H1 (cell line): ENCODE measurements at regions of chr2 and their contacts with region 1.

Region 1: DNA sequence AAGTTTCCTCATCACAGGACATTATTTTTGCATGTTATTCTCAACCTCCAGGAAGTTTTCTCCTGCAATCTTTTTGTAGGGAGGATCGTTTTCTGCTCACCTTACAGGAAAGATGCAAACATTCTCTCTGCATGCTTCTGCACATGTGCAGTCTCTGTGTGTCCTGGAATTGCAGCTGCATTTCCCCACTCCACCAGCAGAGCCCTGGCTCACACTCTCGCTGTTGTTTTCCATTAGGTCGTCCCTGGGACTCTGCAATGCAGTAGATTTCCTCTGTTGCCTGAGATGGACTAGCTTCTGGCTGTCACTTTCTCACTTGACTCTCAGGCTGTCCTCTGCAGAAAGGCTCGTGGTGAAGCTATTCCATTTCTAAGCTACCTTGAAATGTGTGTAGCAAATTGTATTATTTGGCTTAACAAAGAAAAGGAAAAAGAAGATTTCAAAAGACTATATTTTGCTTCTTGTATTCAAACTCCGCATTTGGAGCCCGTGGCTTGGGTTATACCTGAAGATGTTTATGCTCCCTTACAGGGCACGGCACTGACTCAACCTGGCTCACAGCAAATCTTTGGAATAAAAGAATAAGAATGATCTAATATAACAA is 346.7 kb downstream of the RAD51AP2 start:
- DNase-seq: peak; percentile 27 to 64
- H3K4me3 ChIP-seq: no peak overlapping the region
- H3K27ac ChIP-seq: no peak overlapping the region
- H3K4me1 ChIP-seq: no peaks in the 10 kb centered on the region
- H3K27me3 ChIP-seq: peaks cover 0 to 1% (median 0%) of the 10 kb centered on the region in 4 experiments; a peak in 1 of 7 replicates
- CTCF ChIP-seq: peak; percentile 67 to 88 (median 85)
- EP300 ChIP-seq: no peak
- POLR2A ChIP-seq: no peak
- RAD21 ChIP-seq: peak; percentile 65 to 68

Region 2: DNA sequence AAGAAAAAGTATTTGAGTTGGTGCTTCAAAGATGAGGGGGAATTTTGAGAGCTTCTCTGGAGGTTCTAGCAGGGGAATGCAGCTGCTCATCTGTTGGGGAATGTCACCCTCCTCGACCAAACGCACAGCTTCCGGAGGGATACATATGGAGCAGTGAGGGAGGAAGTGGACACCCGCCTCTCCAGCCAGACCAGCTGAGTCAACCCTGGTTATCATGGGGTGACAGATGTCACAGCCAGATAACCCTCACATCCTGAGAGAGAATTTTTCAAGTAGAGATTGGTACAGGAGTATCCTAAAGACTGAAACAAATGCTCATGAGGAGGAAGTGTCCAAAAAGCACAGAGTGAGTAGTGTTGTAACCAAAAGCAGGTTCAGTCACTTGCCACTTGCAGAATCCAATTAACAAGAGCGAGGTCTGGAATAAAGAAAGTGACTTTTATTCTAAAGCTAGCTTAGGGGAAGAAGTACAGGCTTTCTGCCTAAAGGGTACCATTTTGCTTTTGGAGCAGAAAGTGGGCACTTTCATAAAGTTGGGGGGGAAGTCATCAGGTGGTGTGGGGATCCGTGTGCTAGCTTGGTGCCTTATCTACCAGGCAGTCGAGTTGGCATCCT is 48.6 kb before region 1 on chr2:
- CTCF ChIA-PET with region 1: no interaction called
- POLR2A ChIA-PET with region 1: no interaction called
- DNase-seq: no peak
- H3K4me3 ChIP-seq: no peak overlapping the region
- H3K27ac ChIP-seq: no peak overlapping the region
- H3K4me1 ChIP-seq: no peaks in the 10 kb centered on the region
- H3K27me3 ChIP-seq: no peaks in the 10 kb centered on the region
- CTCF ChIP-seq: no peak
- EP300 ChIP-seq: no peak
- POLR2A ChIP-seq: no peak
- RAD21 ChIP-seq: no peak

Region 3: GRCh38 chr2:17148407-17149145 is 23.0 kb before region 1 on chr2:
- CTCF ChIA-PET with region 1: interaction called, 27 read pairs
- POLR2A ChIA-PET with region 1: no interaction called
- DNase-seq: peak; percentile 21 to 56
- H3K4me3 ChIP-seq: no peak overlapping the region
- H3K27ac ChIP-seq: no peak overlapping the region
- H3K4me1 ChIP-seq: peaks cover 0 to 3% (median 0%) of the 10 kb centered on the region in 4 experiments; a peak in 2 of 7 replicates
- H3K27me3 ChIP-seq: no peaks in the 10 kb centered on the region
- CTCF ChIP-seq: peak; percentile 54 to 65 (median 60)
- EP300 ChIP-seq: no peak
- POLR2A ChIP-seq: no peak
- RAD21 ChIP-seq: peak; percentile 71 to 73

Region 4: DNA sequence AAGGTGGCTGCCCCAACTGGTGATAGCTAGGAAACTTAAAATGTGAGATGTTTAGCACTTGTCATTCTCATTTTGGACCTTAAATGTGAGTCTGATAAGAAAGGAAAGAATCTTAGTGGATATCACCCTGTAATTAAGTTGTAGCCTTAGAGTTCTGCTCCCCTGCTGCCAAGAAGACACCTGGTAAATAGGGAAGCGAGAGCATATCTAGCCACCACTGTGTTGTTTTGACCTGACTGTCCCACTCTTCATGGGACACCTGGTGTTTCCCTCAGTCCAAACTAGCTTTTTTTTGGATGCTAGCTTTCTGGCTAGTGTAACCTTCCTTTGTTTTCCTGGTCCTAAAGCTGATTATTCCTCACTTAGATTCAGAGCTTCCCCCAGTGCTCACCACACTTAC is 11.0 kb before region 1 on chr2:
- CTCF ChIA-PET with region 1: interaction called, 28 read pairs
- POLR2A ChIA-PET with region 1: no interaction called
- DNase-seq: no peak
- H3K4me3 ChIP-seq: no peak overlapping the region
- H3K27ac ChIP-seq: no peak overlapping the region
- H3K4me1 ChIP-seq: no peaks in the 10 kb centered on the region
- H3K27me3 ChIP-seq: no peaks in the 10 kb centered on the region
- CTCF ChIP-seq: no peak
- EP300 ChIP-seq: no peak
- POLR2A ChIP-seq: no peak
- RAD21 ChIP-seq: no peak

Region 5: GRCh38 chr2:17188721-17189120 is 17.2 kb after region 1 on chr2:
- CTCF ChIA-PET with region 1: interaction called, 23 read pairs
- POLR2A ChIA-PET with region 1: no interaction called
- DNase-seq: no peak
- H3K4me3 ChIP-seq: no peak overlapping the region
- H3K27ac ChIP-seq: no peak overlapping the region
- H3K4me1 ChIP-seq: no peaks in the 10 kb centered on the region
- H3K27me3 ChIP-seq: no peaks in the 10 kb centered on the region
- CTCF ChIP-seq: no peak
- EP300 ChIP-seq: no peak
- POLR2A ChIP-seq: no peak
- RAD21 ChIP-seq: no peak